Mammary epithelial cell (primary cell): ENCODE measurements at regions of chr9 and their contacts with region 1.

Region 1: DNA sequence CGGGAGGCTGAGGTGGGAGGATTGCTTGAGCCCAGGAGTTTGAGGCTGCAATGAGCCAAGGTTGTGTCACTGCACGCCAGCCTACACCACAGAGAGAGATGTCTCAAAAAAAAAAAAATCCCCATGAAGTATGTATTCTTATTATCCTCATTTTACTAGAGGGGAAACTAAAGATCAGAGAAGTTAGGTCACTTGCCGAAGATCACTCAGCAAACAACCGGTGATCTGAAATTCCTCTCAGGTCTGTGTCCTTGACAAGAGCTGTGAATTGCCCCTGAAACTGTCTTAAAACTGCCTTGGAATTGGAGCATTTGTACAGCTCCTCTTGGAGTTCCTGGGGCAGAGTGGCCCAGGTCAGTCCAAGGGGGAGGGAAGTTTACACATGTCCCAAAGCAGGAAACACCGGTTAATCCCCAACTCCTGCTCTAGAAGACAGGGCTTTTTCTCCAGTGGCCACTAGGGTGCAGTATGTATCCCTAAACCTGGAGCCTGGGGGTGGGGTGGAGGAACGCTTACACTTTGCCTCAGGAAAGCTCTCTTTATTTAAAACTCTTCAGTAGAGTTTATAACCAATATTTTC is 27.6 kb downstream of the AQP7 start:
- DNase-seq: peak; percentile 60
- H3K4me3 ChIP-seq: no peak overlapping the region
- H3K27ac ChIP-seq: no peak overlapping the region
- H3K4me1 ChIP-seq: no peaks in the 10 kb centered on the region
- H3K27me3 ChIP-seq: no peaks in the 10 kb centered on the region
- CTCF ChIP-seq: peak; percentile 86 to 94

Region 2: GRCh38 chr9:33466565-33467495 is 92.1 kb after region 1 on chr9:
- CTCF ChIA-PET with region 1: interaction called, 6 read pairs
- dilution Hi-C with region 1: no loop called
- in situ Hi-C with region 1: no loop called
- intact Hi-C with region 1: loop called (anchors 1 kb)
- DNase-seq: no peak
- H3K4me3 ChIP-seq: no peak overlapping the region
- H3K27ac ChIP-seq: no peak overlapping the region
- H3K4me1 ChIP-seq: peaks cover 17% of the 10 kb centered on the region
- H3K27me3 ChIP-seq: no peaks in the 10 kb centered on the region
- CTCF ChIP-seq: peak; percentile 98

Region 3: DNA sequence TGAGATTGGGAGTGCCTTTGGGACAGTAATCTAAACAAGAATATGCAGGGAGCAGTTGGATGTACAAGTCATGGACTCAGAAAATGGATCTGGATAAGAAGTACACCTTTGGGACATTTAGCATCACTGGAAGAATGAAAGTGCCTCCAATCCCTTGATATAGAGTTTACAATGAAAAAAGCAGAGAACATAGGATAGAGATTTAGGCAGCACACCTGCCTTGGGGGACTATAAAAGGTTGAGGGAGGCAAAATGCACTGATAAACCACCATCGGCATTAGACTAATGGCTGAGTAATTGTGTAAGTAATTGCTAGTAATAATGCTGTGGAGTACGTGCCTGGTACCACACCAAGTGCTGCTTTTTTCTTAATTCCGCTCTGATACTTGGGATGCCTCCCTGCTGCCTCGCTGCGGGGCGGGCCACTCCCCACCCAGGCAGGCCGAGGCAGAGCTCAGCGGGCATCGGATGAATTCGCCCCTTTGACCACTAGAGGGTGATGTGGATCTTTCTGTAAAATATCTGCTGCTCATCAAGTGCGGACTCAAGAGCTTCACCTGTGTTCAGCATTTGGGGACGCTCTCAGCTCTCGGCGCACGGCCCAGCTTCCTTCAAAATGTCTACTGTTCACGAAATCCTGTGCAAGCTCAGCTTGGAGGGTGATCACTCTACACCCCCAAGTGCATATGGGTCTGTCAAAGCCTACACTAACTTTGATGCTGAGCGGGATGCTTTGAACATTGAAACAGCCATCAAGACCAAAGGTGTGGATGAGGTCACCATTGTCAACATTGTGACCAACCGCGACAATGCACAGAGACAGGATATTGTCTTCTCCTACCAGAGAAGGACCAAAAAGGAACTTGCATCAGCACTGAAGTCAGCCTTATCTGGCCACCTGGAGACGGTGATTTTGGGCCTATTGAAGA is 249.2 kb after region 1 on chr9:
- CTCF ChIA-PET with region 1: no interaction called
- dilution Hi-C with region 1: no loop called
- in situ Hi-C with region 1: no loop called
- intact Hi-C with region 1: loop called (anchors 10 kb)
- DNase-seq: peak; percentile 74
- H3K4me3 ChIP-seq: no peak overlapping the region
- H3K27ac ChIP-seq: no peak overlapping the region
- H3K4me1 ChIP-seq: peaks cover 29% of the 10 kb centered on the region
- H3K27me3 ChIP-seq: no peaks in the 10 kb centered on the region
- CTCF ChIP-seq: peak; percentile 77 to 84

Region 4: GRCh38 chr9:33721674-33722358 is 347.1 kb after region 1 on chr9:
- CTCF ChIA-PET with region 1: no interaction called
- dilution Hi-C with region 1: no loop called
- in situ Hi-C with region 1: no loop called
- intact Hi-C with region 1: loop called (anchors 1 kb)
- DNase-seq: peak; percentile 65
- H3K4me3 ChIP-seq: no peak overlapping the region
- H3K27ac ChIP-seq: no peak overlapping the region
- H3K4me1 ChIP-seq: no peaks in the 10 kb centered on the region
- H3K27me3 ChIP-seq: no peaks in the 10 kb centered on the region
- CTCF ChIP-seq: peak; percentile 99 to 100